Caco-2 (cell line): ENCODE measurements at regions of chr3 and their contacts with region 1.

Region 1: DNA sequence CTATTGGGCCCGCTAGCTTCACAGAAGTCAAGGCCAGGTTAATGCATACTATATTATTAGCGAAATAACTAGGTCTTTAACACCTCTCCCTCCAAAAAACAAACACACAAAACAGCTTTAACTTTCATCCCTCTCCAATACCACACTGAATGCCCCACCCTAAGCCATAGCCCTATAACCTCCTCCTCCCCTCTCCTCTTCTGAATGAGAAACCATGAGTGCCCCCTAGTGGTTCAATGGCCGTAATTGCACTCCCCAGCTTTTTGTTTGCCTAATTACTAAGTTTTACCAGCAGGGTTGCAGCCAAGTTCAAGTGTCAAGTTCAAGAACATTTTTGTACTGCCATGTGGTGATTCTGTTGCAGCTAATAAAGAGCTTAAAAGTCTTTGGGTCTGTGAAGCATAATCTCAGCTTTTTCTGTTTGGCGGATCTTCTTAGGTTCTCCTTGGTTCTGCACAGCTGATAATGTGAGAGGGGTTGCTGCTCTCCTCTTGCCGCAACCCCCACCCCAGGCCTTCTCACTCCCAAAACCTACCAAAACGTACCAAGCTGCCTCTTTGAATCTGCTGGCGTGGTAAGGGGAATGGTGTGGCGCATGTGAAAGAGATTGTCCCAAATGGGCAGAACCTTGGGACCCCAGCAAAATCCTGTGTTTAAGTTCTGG is 57.9 kb downstream of the RPL22L1 start:
- DNase-seq: peak; percentile 77 to 79
- H3K4me3 ChIP-seq: no peak overlapping the region
- H3K4me3 Mint-ChIP-seq: no peak overlapping the region
- H3K27ac Mint-ChIP-seq: no peak overlapping the region
- H3K4me1 ChIP-seq: no peaks in the 10 kb centered on the region
- H3K4me1 Mint-ChIP-seq: no peaks in the 10 kb centered on the region
- H3K27me3 ChIP-seq: no peaks in the 10 kb centered on the region
- H3K27me3 Mint-ChIP-seq: peaks cover 6% of the 10 kb centered on the region
- CTCF ChIP-seq: peak; percentile 88 to 89

Region 2: GRCh38 chr3:170321321-170322034 is 490.6 kb before region 1 on chr3:
- CTCF ChIA-PET with region 1: no interaction called
- POLR2A ChIA-PET with region 1: no interaction called
- intact Hi-C with region 1: loop called (anchors 10 kb)
- DNase-seq: no peak
- H3K4me3 ChIP-seq: no peak overlapping the region
- H3K4me3 Mint-ChIP-seq: no peak overlapping the region
- H3K27ac Mint-ChIP-seq: no peak overlapping the region
- H3K4me1 ChIP-seq: peaks cover 12% of the 10 kb centered on the region
- H3K4me1 Mint-ChIP-seq: peaks cover 6% of the 10 kb centered on the region
- H3K27me3 ChIP-seq: no peaks in the 10 kb centered on the region
- H3K27me3 Mint-ChIP-seq: no peaks in the 10 kb centered on the region
- CTCF ChIP-seq: no peak

Region 3: DNA sequence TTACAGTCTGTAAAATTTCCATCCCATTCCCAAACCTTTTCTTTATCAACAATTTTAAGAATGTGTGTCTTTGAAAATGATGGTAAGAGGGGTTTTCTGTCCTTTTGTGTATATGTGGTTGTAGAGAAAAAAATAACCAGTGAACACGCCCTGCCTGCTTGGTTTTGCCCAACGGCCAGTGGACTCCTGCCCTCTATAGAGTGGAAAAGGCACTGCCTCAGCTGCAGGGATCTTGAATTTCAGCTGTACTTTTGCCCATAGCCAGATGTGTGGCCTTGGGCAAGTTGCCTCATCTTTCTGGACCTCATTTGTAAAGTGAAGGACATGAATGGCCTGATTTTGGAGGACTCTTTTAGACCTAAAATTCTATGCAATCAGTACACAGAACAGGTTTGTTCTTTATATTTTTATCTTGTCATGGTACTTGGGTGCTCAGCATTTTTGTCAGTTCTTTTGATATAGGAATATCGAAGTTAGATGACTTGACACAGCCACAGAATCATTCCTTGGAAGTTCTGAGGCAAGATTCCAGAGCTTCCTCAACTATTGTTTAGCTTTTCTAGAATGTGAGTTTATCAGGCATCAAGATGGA is 312.4 kb before region 1 on chr3:
- CTCF ChIA-PET with region 1: interaction called, 4 read pairs
- POLR2A ChIA-PET with region 1: no interaction called
- intact Hi-C with region 1: loop called (anchors 10 kb)
- DNase-seq: peak; percentile 46 to 47
- H3K4me3 ChIP-seq: no peak overlapping the region
- H3K4me3 Mint-ChIP-seq: no peak overlapping the region
- H3K27ac Mint-ChIP-seq: no peak overlapping the region
- H3K4me1 ChIP-seq: no peaks in the 10 kb centered on the region
- H3K4me1 Mint-ChIP-seq: no peaks in the 10 kb centered on the region
- H3K27me3 ChIP-seq: no peaks in the 10 kb centered on the region
- H3K27me3 Mint-ChIP-seq: no peaks in the 10 kb centered on the region
- CTCF ChIP-seq: peak; percentile 46 to 78

Region 4: DNA sequence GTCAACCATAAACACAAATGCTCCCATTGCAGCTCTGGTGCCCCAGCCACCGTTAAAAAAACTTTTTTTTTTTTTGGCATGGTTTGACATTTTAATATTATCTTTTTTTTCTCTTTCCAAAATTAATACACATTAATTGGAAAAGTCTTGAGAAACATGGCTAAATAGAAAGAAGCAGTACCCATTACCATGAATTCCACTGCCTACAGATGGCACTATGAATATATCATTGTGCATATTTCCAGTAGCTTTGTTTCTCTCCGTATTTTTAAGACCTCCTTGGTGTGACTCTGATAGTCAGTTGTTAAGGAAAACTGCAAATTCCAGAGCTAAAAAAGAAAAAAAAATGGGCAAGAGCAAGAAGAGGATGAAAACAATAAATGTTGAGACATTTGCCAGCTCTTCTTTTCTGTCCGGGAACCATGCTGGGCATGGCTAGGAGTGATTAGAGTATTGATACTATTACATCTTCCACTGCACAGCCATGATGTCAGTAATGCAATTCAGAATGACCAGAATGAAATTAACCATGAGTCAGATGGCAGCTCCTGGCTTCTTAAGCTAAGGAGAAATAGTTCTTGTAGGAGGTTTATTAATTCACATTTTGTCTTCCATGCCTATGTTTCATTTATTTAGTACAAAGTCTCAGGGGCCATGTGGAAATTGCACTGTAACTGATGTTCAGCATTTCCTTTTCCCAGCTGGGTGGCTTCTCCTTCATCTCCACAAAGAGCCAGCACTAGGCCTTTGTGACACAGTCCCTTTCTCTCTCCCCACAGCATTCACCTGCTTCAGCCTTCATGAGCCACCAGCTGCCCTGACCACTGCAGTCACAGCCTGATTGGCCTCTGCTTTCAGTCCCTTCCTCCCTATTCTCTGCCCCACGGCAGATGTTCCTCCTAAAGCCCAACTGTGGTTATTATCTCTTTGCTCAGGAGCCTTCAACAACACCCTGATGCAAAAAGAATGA is 258.0 kb before region 1 on chr3:
- CTCF ChIA-PET with region 1: interaction called, 7 read pairs
- POLR2A ChIA-PET with region 1: no interaction called
- intact Hi-C with region 1: loop called (anchors 2 kb)
- DNase-seq: no peak
- H3K4me3 ChIP-seq: no peak overlapping the region
- H3K4me3 Mint-ChIP-seq: no peak overlapping the region
- H3K27ac Mint-ChIP-seq: no peak overlapping the region
- H3K4me1 ChIP-seq: no peaks in the 10 kb centered on the region
- H3K4me1 Mint-ChIP-seq: no peaks in the 10 kb centered on the region
- H3K27me3 ChIP-seq: no peaks in the 10 kb centered on the region
- H3K27me3 Mint-ChIP-seq: peaks cover 9% of the 10 kb centered on the region
- CTCF ChIP-seq: no peak

Region 5: DNA sequence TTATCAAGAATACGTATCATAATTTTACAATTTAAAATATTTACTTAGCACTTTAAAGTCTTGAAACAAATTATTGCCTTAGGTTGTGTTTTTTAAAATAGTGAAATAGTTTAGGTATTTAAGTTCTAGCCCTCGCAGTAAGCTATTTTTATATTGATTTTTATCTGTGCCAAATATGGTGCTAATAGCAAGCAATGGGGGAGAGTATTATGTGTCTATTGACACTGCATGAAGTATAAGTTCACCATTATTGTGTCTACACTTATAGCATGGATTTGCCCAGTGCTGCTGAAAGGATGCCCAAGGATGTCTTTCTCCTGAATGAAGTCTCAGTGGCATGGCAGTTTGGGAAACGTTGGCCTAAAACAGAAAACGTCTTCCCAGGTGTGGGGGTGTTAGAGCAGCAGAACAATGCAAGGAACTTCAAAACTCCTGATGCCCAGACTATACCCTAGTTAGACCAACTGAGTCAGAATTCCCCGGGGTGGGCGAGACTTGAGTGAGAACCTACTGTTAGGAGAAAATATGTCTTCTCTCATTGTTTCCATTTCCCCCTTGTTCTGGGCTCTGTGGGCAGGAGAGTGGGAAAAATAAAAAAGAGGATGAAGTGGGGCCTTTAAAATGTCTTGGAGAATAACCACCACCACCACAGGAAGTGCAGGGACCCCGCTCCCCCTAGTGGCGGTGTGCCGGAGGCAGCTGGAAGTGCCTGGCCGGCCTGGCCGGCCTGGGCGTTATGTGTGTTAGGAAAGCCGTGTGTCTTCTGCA is 122.0 kb before region 1 on chr3:
- CTCF ChIA-PET with region 1: interaction called, 3 read pairs
- POLR2A ChIA-PET with region 1: no interaction called
- intact Hi-C with region 1: loop called (anchors 5 kb)
- DNase-seq: peak; percentile 63 to 77
- H3K4me3 ChIP-seq: no peak overlapping the region
- H3K4me3 Mint-ChIP-seq: no peak overlapping the region
- H3K27ac Mint-ChIP-seq: peak overlapping the region; percentile 80
- H3K4me1 ChIP-seq: peaks cover 25% of the 10 kb centered on the region
- H3K4me1 Mint-ChIP-seq: peaks cover 7% of the 10 kb centered on the region
- H3K27me3 ChIP-seq: no peaks in the 10 kb centered on the region
- H3K27me3 Mint-ChIP-seq: no peaks in the 10 kb centered on the region
- CTCF ChIP-seq: peak; percentile 82 to 89

Region 6: GRCh38 chr3:170740726-170741591 is 71.1 kb before region 1 on chr3:
- CTCF ChIA-PET with region 1: no interaction called
- POLR2A ChIA-PET with region 1: no interaction called
- intact Hi-C with region 1: no loop called
- DNase-seq: no peak
- H3K4me3 ChIP-seq: no peak overlapping the region
- H3K4me3 Mint-ChIP-seq: no peak overlapping the region
- H3K27ac Mint-ChIP-seq: no peak overlapping the region
- H3K4me1 ChIP-seq: peaks cover 16% of the 10 kb centered on the region
- H3K4me1 Mint-ChIP-seq: peaks cover 18% of the 10 kb centered on the region
- H3K27me3 ChIP-seq: no peaks in the 10 kb centered on the region
- H3K27me3 Mint-ChIP-seq: peaks cover 6% of the 10 kb centered on the region
- CTCF ChIP-seq: no peak